Activated CD4-positive, alpha-beta T cell treated with anti-CD3 and anti-CD28 coated beads for 36 hours (primary cell): ENCODE measurements at regions of chr7 and their contacts with region 1.

Region 1: GRCh38 chr7:74094224-74095101 is 10.9 kb downstream of the LIMK1 start:
- DNase-seq: peak; percentile 91
- ATAC-seq: peak; percentile 93
- H3K4me3 Mint-ChIP-seq: peak overlapping the region; percentile 52
- H3K27ac Mint-ChIP-seq: peak overlapping the region; percentile 59
- H3K4me1 Mint-ChIP-seq: peaks cover 18% of the 10 kb centered on the region
- H3K27me3 Mint-ChIP-seq: no peaks in the 10 kb centered on the region

Region 2: GRCh38 chr7:74083117-74083876 is 11.2 kb before region 1 on chr7 and contains the start of gene LIMK1:
- CTCF ChIA-PET with region 1: no interaction called
- POLR2A ChIA-PET with region 1: interaction called, 3 read pairs
- intact Hi-C with region 1: loop called (anchors 1 kb)
- DNase-seq: peak; percentile 90
- ATAC-seq: peak; percentile 89
- H3K4me3 Mint-ChIP-seq: peak within 1 kb of the TSS; percentile 79
- H3K27ac Mint-ChIP-seq: peak within 1 kb of the TSS; percentile 77
- H3K4me1 Mint-ChIP-seq: peaks cover 5% of the 10 kb centered on the region
- H3K27me3 Mint-ChIP-seq: no peaks in the 10 kb centered on the region
- total RNA-seq, gene LIMK1: 12.5 to 14.8 TPM

Region 3: DNA sequence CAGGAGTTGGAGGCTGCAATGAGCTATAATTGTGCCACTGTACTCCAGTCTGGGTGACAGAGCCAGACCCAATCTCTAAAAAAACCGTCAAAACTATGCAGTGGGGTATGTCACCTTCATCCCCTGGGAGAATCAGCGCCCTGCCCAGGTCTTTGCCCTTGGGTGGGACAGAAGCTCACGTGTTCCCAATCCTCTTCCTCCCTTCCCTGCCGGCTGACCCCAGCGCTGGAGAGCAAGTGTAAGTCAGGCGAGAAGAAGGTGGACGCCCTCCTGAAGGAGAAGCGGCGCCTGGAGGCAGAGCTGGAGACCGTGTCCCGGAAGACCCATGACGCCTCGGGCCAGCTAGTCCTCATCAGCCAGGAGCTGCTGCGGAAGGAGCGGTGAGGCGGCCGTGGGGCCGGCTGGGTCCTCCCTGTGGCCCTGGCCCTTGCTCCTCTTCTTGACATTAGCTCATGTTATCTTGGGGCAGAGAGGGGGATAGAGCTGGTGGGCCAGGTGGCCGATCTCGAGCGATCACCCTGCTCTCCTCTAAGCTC is 294.5 kb after region 1 on chr7:
- CTCF ChIA-PET with region 1: no interaction called
- POLR2A ChIA-PET with region 1: no interaction called
- intact Hi-C with region 1: no loop called
- DNase-seq: no peak
- ATAC-seq: no peak
- H3K4me3 Mint-ChIP-seq: no peak overlapping the region
- H3K27ac Mint-ChIP-seq: no peak overlapping the region
- H3K4me1 Mint-ChIP-seq: no peaks in the 10 kb centered on the region
- H3K27me3 Mint-ChIP-seq: no peaks in the 10 kb centered on the region

Region 4: DNA sequence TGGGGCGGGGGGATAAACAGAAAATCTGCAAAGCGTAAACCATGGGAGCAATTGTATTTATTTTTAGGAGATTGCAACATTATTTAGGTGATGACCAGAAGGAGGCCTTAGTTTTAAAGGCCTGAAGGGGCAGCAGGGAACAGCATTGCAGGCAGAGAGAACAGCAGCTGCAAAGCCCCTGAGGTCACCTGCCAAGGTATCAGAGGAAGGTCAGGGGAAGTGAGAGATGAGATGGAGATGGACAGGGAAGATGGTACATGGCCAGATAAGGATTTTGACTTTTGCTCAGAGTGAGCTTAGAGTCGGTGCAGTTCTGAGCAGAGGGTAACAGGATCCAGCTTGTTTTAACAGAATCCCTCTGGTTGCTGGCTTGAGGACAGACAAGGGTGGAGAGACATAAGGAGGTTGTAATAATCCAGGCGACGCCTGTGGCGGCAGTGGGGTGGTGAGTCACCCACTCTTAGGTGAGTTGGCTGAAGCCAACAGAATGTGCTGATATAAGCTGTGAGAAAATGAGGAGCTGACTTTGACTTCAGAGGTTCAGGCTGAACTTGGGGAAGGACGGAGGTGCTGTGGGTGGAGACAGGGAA is 480.8 kb after region 1 on chr7:
- CTCF ChIA-PET with region 1: no interaction called
- POLR2A ChIA-PET with region 1: no interaction called
- intact Hi-C with region 1: no loop called
- DNase-seq: peak; percentile 13
- ATAC-seq: no peak
- H3K4me3 Mint-ChIP-seq: no peak overlapping the region
- H3K27ac Mint-ChIP-seq: no peak overlapping the region
- H3K4me1 Mint-ChIP-seq: no peaks in the 10 kb centered on the region
- H3K27me3 Mint-ChIP-seq: no peaks in the 10 kb centered on the region